ENCODE measurements at regions of chr2 and their contacts with region 1.

Region 1: DNA sequence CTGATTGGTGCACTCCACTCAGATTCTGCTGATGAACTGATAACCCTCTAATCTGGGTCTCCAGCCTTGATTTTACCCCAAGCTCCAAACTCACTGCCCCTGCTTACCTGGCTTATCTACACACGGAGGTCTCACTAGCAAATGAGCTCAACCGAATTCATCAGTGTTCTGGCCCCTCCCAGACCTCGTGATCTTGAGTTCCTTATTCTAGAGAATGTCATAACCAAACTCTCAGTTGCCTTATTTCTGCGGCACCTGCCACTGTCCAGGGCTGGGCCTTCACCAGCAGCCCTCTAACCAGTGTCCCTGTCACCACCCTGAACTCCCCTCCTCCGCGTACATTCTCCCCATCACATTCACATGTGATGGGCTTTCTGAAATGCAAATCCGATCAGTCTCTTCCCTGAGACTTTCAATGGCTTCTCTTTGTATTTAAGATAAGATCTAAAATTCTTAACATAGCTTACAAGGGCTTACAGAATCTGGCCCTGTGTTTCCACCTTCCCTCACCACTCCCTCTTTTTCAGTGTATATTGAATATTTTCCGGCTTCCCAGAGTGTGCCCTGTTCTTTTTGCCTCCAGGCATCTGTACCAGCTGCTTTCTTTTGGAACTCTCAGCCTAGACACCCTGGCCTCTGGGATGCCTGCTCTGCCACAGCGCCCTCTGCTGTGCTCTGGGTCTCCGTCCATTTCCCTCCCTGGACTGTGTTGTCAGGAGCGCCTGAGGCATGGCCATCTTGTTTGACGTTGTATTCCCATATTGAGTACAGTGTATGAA is 31.1 kb downstream of the NAB1 start:
- DNase-seq: peak; percentile 54
- ATAC-seq: peak; percentile 81
- H3K4me3 ChIP-seq: peak overlapping the region; percentile 6; the same call in 1 of the 2 replicates
- H3K27ac ChIP-seq: peak overlapping the region; percentile 87
- H3K4me1 ChIP-seq: peaks cover 43% of the 10 kb centered on the region
- H3K27me3 ChIP-seq: no peaks in the 10 kb centered on the region
- CTCF ChIP-seq: peak; percentile 65 to 85 (median 82)
- EP300 ChIP-seq: 0 out of 4 replicates have a peak, but pooled peaks of 1 of the 2 experiments have one; percentile 42
- POLR2A ChIP-seq: peak; percentile 86
- RAD21 ChIP-seq: peak; percentile 84

Region 2: DNA sequence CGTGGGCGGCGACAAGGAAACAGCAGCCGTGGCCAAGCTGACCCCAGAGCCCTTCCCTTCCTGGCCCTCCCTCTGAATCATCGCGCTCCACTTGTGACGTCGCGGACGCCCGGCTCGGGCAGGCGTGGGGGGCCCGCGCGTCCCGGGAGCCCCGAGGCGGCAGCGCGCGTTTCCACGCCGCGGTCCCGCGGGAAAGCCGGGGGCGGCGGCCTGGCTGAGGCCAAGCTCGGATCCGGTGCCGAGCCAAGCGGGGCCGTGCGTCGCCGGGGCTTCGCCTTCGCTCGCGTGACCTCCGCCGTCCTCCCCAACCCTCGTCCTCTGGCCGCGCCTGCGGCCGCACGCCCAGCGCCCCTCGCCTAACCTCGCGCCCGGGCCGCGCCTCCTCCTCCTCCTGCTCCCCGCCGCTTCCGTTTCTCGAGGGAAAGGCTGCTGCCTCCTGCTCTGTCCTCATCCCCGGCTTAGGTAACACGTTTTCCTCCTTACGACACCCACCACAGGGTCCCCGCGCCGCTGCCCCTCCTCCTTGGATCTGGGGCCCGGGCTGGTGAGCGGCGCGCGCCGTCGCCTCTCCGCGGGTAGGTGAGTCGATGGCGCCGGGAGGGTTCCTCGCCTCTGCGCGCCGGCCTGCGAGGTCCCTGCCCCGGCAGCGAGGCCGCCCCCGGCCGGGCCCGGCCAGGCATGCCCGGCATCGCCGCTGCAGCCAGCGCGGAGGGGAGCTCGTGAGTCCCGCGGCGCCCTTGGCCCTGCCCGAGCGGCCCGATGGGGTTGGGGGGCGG is 336.3 kb before region 1 on chr2 and contains the start of gene INPP1:
- CTCF ChIA-PET with region 1: interaction called, 8 read pairs
- POLR2A ChIA-PET with region 1: no interaction called
- RAD21 ChIA-PET with region 1: interaction called, 15 read pairs
- SMC1A ChIA-PET with region 1: interaction called, 3 read pairs
- in situ Hi-C with region 1: no loop called
- intact Hi-C with region 1: no loop called
- DNase-seq: no peak
- ATAC-seq: peak; percentile 83
- H3K4me3 ChIP-seq: peak within 1 kb of the TSS; percentile 77
- H3K27ac ChIP-seq: peak within 1 kb of the TSS; percentile 44; the same call in 1 of the 2 replicates
- H3K4me1 ChIP-seq: peaks cover 8% of the 10 kb centered on the region; the same call in 1 of the 2 replicates
- H3K27me3 ChIP-seq: no peaks in the 10 kb centered on the region
- CTCF ChIP-seq: no peak
- EP300 ChIP-seq: 0 out of 4 replicates have a peak, but pooled peaks of 1 of the 2 experiments have one; percentile 17
- POLR2A ChIP-seq: peak; percentile 53
- RAD21 ChIP-seq: no peak
- polyA plus RNA-seq, gene INPP1: 3.3 to 8.9 TPM

Region 3: DNA sequence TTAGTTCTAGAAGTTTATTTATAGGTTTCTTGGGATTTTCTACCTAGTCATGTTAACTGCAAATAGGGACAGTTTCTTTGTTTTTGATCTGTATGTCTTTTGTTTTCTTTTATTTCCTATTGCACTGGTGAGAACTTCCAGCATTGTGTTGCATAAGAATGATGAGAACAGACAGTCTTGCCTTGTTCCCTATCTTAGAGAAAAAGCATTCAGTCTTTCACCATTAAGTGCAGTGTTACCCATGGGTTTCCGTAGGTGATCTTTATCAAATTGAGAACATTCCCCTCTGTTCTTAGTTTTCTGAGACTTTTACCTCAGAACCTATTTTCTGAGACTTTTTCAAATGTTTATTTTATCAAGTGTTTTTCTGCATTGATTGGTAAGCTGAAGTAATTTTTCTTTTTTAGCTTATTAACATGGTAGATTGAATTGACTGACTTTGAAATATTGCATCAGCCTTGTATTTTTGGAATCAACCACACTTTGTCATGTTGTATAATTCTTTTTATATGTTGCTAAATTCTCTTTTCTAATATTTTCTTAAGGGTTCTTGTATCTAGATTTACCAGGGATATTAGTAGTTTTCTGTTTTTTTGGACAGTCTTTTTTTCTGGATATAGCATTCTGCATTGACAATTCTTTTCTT is 254.7 kb before region 1 on chr2:
- CTCF ChIA-PET with region 1: no interaction called
- POLR2A ChIA-PET with region 1: no interaction called
- RAD21 ChIA-PET with region 1: no interaction called
- SMC1A ChIA-PET with region 1: no interaction called
- in situ Hi-C with region 1: no loop called
- intact Hi-C with region 1: no loop called
- DNase-seq: no peak
- ATAC-seq: no peak
- H3K4me3 ChIP-seq: no peak overlapping the region
- H3K27ac ChIP-seq: no peak overlapping the region
- H3K4me1 ChIP-seq: peaks cover 6% of the 10 kb centered on the region
- H3K27me3 ChIP-seq: no peaks in the 10 kb centered on the region
- CTCF ChIP-seq: no peak
- EP300 ChIP-seq: no peak
- POLR2A ChIP-seq: no peak
- RAD21 ChIP-seq: no peak

Region 4: DNA sequence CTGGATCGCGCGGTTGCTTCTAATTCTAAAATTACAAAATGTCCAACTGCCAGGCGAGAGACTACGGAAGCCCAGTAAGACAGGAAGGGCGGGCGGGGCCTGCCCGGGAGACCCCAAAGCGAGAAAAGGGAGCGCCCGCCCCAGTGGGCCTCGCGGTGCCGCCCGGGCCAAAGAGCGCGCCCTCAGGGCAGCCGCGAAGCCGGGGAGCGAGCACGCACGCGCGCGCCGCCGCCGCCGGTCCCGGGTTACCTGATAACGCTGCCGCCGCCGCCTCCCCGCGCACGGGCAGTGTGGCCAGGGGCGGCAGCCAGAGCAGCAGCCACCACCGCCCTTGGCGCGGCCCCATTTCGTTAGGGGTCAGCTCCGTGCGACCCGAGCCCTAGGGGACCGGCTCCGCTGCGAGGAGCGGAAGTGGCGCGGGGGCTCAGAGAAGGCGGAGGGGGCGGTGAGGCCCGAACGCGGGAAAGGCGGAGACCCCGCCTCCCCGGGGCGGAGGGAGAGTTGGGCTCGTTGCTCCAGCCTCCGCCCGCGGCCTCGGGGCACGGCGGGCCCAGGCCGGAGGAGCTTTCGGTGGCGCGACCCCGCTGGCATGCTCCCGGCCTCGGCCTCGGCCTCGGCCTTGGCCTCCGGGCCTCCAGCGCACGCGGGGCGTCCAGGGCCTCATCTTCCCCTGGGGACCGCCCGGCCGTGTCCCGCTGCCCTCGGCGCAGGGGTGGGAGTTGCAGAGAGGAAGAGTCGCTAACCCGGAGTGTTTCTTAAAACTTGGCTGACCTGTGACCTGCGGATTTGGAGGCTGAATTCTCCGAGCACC is 145.5 kb before region 1 on chr2 and contains the start of gene NEMP2:
- CTCF ChIA-PET with region 1: interaction called, 32 read pairs
- POLR2A ChIA-PET with region 1: interaction called, 29 read pairs
- RAD21 ChIA-PET with region 1: interaction called, 38 read pairs
- SMC1A ChIA-PET with region 1: interaction called, 36 read pairs
- in situ Hi-C with region 1: no loop called
- intact Hi-C with region 1: loop called (anchors 2 kb)
- DNase-seq: no peak
- ATAC-seq: peak; percentile 80
- H3K4me3 ChIP-seq: peak within 1 kb of the TSS; percentile 88
- H3K27ac ChIP-seq: peak within 1 kb of the TSS; percentile 97
- H3K4me1 ChIP-seq: peaks cover 21% of the 10 kb centered on the region
- H3K27me3 ChIP-seq: no peaks in the 10 kb centered on the region
- CTCF ChIP-seq: no peak
- EP300 ChIP-seq: no peak
- POLR2A ChIP-seq: peak; percentile 94
- RAD21 ChIP-seq: no peak
- polyA plus RNA-seq, gene NEMP2: 2.3 to 3.6 TPM

Region 5: GRCh38 chr2:190636373-190636772 is 43.6 kb before region 1 on chr2:
- CTCF ChIA-PET with region 1: interaction called, 78 read pairs
- POLR2A ChIA-PET with region 1: interaction called, 3 read pairs
- RAD21 ChIA-PET with region 1: interaction called, 58 read pairs
- SMC1A ChIA-PET with region 1: interaction called, 63 read pairs
- in situ Hi-C with region 1: no loop called
- intact Hi-C with region 1: no loop called
- DNase-seq: no peak
- ATAC-seq: 0 out of 3 replicates have a peak, but pooled peaks have one; percentile 12
- H3K4me3 ChIP-seq: no peak overlapping the region
- H3K27ac ChIP-seq: no peak overlapping the region
- H3K4me1 ChIP-seq: 0 out of 2 replicates have a peak, but pooled peaks cover 3% of the 10 kb centered on the region
- H3K27me3 ChIP-seq: no peaks in the 10 kb centered on the region
- CTCF ChIP-seq: no peak
- EP300 ChIP-seq: no peak
- POLR2A ChIP-seq: no peak
- RAD21 ChIP-seq: no peak

Region 6: GRCh38 chr2:190693533-190694232 is 13.7 kb after region 1 on chr2:
- CTCF ChIA-PET with region 1: interaction called, 283 read pairs
- POLR2A ChIA-PET with region 1: interaction called, 29 read pairs
- RAD21 ChIA-PET with region 1: interaction called, 178 read pairs
- SMC1A ChIA-PET with region 1: interaction called, 385 read pairs
- in situ Hi-C with region 1: no loop called
- intact Hi-C with region 1: no loop called
- DNase-seq: no peak
- ATAC-seq: peak; percentile 71
- H3K4me3 ChIP-seq: no peak overlapping the region
- H3K27ac ChIP-seq: peak overlapping the region; percentile 46
- H3K4me1 ChIP-seq: peaks cover 18% of the 10 kb centered on the region
- H3K27me3 ChIP-seq: no peaks in the 10 kb centered on the region
- CTCF ChIP-seq: no peak
- EP300 ChIP-seq: peak; percentile 13 to 58; a peak in 3 of 4 replicates
- POLR2A ChIP-seq: no peak
- RAD21 ChIP-seq: no peak

Region 7: GRCh38 chr2:190746971-190747761 is 67.2 kb after region 1 on chr2:
- CTCF ChIA-PET with region 1: interaction called, 3 read pairs
- POLR2A ChIA-PET with region 1: no interaction called
- RAD21 ChIA-PET with region 1: interaction called, 18 read pairs
- SMC1A ChIA-PET with region 1: interaction called, 9 read pairs
- in situ Hi-C with region 1: no loop called
- intact Hi-C with region 1: no loop called
- DNase-seq: no peak
- ATAC-seq: no peak
- H3K4me3 ChIP-seq: no peak overlapping the region
- H3K27ac ChIP-seq: no peak overlapping the region
- H3K4me1 ChIP-seq: no peaks in the 10 kb centered on the region
- H3K27me3 ChIP-seq: no peaks in the 10 kb centered on the region
- CTCF ChIP-seq: no peak
- EP300 ChIP-seq: no peak
- POLR2A ChIP-seq: no peak
- RAD21 ChIP-seq: no peak

Region 8: DNA sequence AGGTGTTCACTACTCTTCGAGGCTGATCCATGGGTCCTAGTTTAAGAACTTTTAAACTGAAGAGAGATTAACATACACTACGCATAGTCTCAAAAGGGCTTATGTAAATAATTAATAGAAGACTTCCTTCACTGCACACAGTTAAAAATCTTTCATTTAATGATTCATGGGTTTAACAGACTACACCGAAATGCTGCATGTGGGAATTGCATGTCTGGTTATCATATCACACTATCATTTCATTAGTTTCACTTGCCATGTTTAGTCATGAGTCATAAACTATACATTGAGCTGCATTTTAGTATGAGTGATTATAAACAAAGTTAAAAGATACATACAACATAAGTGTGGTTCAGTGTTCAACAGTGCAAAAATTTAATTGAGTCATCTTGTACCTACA is 231.8 kb after region 1 on chr2:
- CTCF ChIA-PET with region 1: no interaction called
- POLR2A ChIA-PET with region 1: no interaction called
- RAD21 ChIA-PET with region 1: no interaction called
- SMC1A ChIA-PET with region 1: no interaction called
- in situ Hi-C with region 1: no loop called
- intact Hi-C with region 1: no loop called
- DNase-seq: peak; percentile 43
- ATAC-seq: peak; percentile 87
- H3K4me3 ChIP-seq: no peak overlapping the region
- H3K27ac ChIP-seq: peak overlapping the region; percentile 27; the same call in 1 of the 2 replicates
- H3K4me1 ChIP-seq: no peaks in the 10 kb centered on the region
- H3K27me3 ChIP-seq: no peaks in the 10 kb centered on the region
- CTCF ChIP-seq: no peak
- EP300 ChIP-seq: peak; percentile 33 to 42; a peak in 1 of 4 replicates
- POLR2A ChIP-seq: no peak
- RAD21 ChIP-seq: no peak

Measured in GM12878 (cell line).